Activated CD4-positive, alpha-beta T cell treated with anti-CD3 and anti-CD28 coated beads, Interleukin-2, amount 10 ng/mL, durations not matched to agents 24 days and 14 days (primary cell): ENCODE measurements at regions of chr3 and their contacts with region 1.

Region 1: GRCh38 chr3:186534113-186534669 is 10.0 kb downstream of the CRYGS start:
- DNase-seq: peak; percentile 85
- H3K4me3 Mint-ChIP-seq: peak overlapping the region; percentile 78
- H3K27ac Mint-ChIP-seq: peak overlapping the region; percentile 100
- H3K4me1 Mint-ChIP-seq: peaks cover 52% of the 10 kb centered on the region
- H3K27me3 Mint-ChIP-seq: no peaks in the 10 kb centered on the region

Region 2: DNA sequence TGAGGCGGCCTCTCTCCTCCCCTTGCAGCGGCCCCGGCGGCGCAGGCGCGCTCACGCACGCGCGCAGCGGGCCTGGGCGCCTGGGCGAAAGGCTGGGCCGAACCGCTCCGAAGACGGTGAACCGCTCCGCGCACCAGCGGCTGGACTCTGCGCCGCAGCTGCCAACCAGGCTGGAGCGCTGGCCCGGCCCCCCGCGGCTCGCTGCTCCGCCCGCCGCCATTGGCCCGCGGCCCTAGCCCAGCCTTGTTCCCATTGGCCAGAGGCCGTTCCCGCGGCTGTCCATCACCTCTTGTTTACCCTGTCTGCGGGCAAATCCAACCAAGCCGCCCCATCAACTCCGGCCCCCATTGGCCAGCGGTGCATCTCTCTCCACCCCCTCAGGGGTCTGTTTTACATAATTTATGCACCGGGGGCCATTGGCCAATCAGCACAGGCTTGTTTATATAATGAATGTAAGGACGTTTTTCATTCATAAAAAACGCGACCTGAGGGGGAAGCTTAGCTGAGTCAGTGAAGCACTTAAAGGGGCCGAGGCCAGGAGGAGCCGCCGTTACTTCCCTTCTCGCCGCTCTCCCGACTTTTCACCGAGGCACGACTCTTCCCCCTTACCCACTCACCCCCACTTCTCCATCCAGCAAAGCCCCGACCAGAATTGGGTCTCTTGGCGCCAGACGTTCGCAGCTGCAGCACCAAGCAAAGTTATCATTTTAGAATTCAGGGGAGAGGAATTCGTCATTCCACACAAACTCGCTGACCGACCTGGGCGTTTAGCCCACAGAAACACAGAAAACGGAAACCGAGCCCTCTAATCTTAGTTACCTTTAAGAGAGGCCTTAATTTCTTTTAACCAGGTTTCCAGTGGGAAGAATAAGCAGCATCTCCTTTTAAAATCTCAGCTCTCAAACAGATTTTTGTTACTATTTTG is 425.0 kb before region 1 on chr3 and contains the start of gene ETV5:
- intact Hi-C with region 1: loop called (anchors 1 kb)
- DNase-seq: peak; percentile 97
- H3K4me3 Mint-ChIP-seq: peak within 1 kb of the TSS; percentile 89
- H3K27ac Mint-ChIP-seq: peak within 1 kb of the TSS; percentile 63
- H3K4me1 Mint-ChIP-seq: peaks cover 31% of the 10 kb centered on the region
- H3K27me3 Mint-ChIP-seq: peaks cover 76% of the 10 kb centered on the region
- total RNA-seq, gene ETV5: 2.2 and 2.5 TPM in 2 replicates

Region 3: DNA sequence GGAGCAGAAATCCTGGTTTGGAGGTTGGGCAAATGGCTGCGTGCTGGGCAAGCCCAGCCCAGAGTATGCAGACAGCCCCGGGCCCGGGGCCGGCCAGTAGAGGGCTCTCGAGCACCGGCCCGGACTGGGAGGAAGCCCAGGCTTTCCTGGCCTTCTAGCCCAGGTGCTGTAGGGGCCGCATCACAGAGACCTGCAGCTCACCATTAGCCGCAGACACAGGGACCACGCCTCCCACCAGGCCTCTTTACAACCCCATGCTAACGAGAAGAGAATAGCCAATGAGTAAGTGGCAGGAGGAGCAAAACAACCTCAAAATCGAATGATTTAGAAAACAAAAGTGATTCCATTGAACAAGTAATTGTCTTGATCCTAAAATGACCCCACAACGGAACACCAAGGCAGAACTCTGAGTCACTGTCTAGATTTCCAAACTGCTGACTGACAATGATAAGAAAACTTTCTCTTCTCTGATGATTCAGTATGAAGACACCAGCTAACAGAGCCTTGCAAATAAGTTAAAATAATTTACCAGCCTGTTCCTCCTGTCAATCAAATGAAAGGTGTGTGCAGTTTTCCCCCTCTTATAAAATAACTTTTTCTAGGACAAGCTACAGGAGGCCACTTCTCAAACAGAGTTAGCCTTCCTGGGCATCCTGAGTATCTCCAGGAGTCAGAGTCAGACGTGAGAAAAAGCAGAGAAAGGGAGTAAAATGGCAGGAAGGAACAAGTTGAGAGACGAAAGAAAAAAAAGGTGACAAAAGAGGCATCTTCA is 274.4 kb before region 1 on chr3:
- intact Hi-C with region 1: loop called (anchors 1 kb)
- DNase-seq: peak; percentile 86
- H3K4me3 Mint-ChIP-seq: peak overlapping the region; percentile 46
- H3K27ac Mint-ChIP-seq: peak overlapping the region; percentile 76
- H3K4me1 Mint-ChIP-seq: peaks cover 20% of the 10 kb centered on the region
- H3K27me3 Mint-ChIP-seq: peaks cover 5% of the 10 kb centered on the region

Region 4: GRCh38 chr3:186464424-186465093 is 69.6 kb before region 1 on chr3:
- intact Hi-C with region 1: loop called (anchors 5 kb)
- DNase-seq: no peak
- H3K4me3 Mint-ChIP-seq: no peak overlapping the region
- H3K27ac Mint-ChIP-seq: no peak overlapping the region
- H3K4me1 Mint-ChIP-seq: no peaks in the 10 kb centered on the region
- H3K27me3 Mint-ChIP-seq: peaks cover 10% of the 10 kb centered on the region

Region 5: GRCh38 chr3:186514296-186515002 is 19.7 kb before region 1 on chr3:
- intact Hi-C with region 1: loop called (anchors 1 kb)
- DNase-seq: no peak
- H3K4me3 Mint-ChIP-seq: peak overlapping the region; percentile 9
- H3K27ac Mint-ChIP-seq: peak overlapping the region; percentile 76
- H3K4me1 Mint-ChIP-seq: peaks cover 41% of the 10 kb centered on the region
- H3K27me3 Mint-ChIP-seq: no peaks in the 10 kb centered on the region

Region 6: DNA sequence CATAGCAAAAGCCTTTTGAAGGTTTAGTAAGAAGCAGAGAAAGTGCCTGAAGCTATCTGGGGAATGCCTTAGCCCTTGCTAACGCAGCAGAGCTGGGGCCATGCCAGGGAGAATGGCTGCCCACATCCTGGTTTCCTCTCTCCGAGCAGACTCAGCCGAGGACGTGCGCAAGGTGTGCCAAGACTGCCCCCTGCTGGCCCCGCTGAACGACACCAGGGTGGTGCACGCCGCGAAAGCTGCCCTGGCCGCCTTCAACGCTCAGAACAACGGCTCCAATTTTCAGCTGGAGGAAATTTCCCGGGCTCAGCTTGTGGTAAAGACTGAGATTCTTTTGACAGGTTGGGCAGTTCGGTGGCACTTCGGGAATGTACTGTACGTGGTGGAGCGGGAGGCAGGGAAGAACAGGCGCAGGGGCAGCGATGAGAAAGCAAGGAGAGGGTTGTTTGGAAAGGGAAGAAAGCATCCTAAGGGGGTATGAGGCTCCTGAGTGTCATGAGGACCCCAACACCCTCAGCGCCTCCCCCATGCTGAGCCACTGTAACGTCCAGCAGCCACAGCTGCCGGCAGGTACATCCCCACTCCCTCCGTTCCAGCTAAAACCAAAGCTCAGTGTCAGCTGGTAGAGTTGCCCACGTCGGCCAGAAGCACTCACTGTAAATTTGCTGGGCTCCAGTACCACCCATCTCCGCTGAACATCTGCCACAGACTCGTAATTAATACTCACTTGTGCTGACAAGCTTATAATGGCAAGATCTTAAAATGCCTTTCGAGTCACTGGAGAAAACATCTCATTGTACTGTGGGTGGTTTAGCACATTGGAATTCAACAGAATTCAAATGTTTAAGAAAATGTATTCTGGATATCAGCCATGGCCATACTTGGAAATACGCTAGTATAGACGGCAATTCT is 83.1 kb after region 1 on chr3:
- intact Hi-C with region 1: loop called (anchors 5 kb)
- DNase-seq: peak; percentile 94
- H3K4me3 Mint-ChIP-seq: peak overlapping the region; percentile 74
- H3K27ac Mint-ChIP-seq: peak overlapping the region; percentile 68
- H3K4me1 Mint-ChIP-seq: peaks cover 21% of the 10 kb centered on the region
- H3K27me3 Mint-ChIP-seq: peaks cover 30% of the 10 kb centered on the region